CD4-positive, alpha-beta memory T cell (primary cell): ENCODE measurements at regions of chr17 and their contacts with region 1.

Region 1: DNA sequence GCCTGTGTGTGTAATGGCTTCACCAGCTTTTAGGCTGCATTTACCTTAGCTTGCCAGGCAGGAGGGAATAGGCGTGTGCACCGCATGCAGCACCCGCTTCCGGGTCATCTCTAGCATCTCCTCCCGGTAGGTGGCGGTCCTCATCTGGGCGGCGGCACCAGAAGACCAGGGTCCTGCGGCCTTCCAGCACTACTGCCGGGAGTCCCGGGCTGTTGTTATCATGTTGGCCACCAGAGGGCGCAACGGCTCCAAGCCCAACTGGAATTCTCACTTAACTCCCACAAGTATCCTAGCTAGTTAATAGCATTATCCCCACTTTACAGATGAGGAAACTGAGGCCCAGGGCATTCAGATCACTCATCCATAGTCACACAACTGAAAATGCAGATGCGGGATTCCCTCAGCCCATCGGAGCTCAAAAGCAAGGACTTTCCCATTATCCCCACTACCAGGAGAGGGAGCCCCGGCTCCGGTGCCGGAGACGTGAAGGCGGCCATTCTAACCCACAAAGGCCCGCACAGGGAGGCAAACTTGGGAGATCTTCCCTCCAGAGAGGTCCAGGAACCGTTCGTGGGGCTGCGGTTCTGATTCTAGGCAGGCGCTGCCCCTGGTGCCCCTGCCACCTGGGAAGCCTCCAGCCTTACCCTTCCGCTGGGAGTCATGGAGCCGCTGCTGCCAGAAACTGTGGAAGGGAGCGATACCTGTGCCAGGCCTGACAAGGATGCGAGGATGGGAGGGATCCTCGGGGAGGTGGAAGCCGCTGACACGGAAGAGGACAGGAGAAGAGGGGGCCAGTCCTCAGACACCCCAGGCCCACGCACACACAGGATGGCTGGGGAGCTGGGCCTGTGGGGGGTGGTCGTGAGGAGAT is 23.9 kb downstream of the LGALS9 start:
- DNase-seq: peak; percentile 39 to 57 (median 47)
- H3K4me3 ChIP-seq: no peak overlapping the region
- H3K4me3 Mint-ChIP-seq: peak overlapping the region in 1 of 8 donors; percentile 8
- H3K27ac ChIP-seq: no peak overlapping the region
- H3K27ac Mint-ChIP-seq: no peak overlapping the region
- H3K4me1 ChIP-seq: peaks cover 6% of the 10 kb centered on the region
- H3K4me1 Mint-ChIP-seq: peaks cover 0 to 12% (median 7%) of the 10 kb centered on the region in 4 donors
- H3K27me3 ChIP-seq: no peaks in the 10 kb centered on the region
- H3K27me3 Mint-ChIP-seq: peaks cover 0 to 6% of the 10 kb centered on the region in 2 donors

Region 2: DNA sequence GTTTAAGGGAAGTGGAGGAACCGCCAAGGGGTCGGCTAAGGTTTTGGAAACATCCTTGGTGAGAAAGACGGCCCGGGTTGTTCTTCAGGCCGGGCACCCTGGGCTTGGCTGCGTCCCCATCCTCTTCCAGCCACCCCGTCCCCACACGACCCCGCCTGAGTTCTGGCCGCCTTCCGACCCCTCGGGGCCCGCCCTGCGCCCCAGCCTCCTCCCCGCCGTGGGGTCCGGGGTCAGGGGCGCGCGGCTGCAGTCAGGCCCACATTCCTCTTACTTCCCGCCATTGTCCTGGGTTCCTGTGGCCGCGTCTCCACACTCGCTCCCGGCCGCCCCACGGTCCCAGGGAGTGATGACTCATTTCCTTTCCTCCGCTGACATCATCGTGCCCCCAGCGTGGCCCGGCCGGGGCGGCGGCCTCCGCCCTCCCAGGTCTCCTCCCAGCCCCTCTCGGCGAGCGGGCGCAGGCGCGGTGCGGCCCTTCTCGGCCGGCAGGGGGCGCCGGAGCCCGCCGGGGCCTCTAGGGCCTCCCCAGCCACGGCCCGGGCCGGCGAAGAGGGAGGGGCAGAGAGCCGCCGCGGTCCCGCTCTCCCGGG is 301.3 kb before region 1 on chr17:
- CTCF ChIA-PET with region 1: interaction called, 11 read pairs
- POLR2A ChIA-PET with region 1: no interaction called
- intact Hi-C with region 1: loop called (anchors 5 kb)
- DNase-seq: peak; percentile 82 to 88 (median 83)
- H3K4me3 ChIP-seq: peak overlapping the region; percentile 36 to 68
- H3K4me3 Mint-ChIP-seq: peak overlapping the region; percentile 68 to 89 (median 86)
- H3K27ac ChIP-seq: peak overlapping the region; percentile 80
- H3K27ac Mint-ChIP-seq: peak overlapping the region; percentile 75 to 97 (median 95)
- H3K4me1 ChIP-seq: peaks cover 16% of the 10 kb centered on the region
- H3K4me1 Mint-ChIP-seq: peaks cover 10 to 27% (median 19%) of the 10 kb centered on the region in 4 donors
- H3K27me3 ChIP-seq: no peaks in the 10 kb centered on the region
- H3K27me3 Mint-ChIP-seq: no peaks in the 10 kb centered on the region

Region 3: DNA sequence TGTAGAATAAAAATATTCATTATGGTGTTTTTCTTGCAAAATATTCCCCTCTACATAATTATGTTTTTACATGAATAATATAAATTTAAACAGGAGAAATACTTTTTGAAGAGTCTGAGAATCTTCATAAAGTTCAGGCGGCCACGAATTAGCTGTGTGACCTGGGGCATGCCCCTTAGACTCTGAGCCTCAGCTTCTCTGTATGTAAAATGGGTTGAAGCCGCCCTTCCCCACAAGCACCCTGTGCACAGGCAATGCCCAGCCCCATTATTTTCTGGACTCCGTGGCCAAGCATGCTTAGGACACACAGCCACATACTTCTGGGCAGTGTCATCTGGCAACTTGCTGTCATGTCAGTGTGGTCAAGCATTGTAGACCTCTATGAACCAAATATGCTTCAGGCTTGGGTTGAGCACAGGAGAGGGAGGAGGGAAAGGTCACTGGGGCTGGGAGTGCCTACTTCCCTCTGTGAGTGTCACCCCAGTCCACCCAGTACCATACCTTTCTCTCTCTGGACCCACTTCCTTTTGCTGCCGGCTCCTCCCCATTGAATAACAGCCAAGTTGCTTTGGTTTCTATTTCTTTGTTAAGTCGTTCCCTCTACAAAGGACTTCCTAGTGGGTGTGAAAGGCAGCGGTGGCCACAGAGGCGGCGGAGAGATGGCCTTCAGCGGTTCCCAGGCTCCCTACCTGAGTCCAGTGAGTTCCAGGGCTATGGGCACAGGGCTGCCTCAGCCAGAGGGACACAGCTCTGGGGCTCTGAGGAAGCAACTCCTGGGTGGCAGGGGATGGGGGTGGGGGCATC is 24.1 kb before region 1 on chr17 and contains the start of gene LGALS9:
- CTCF ChIA-PET with region 1: interaction called, 30 read pairs
- POLR2A ChIA-PET with region 1: no interaction called
- intact Hi-C with region 1: no loop called
- DNase-seq: peak; percentile 43 to 59 (median 47)
- H3K4me3 ChIP-seq: peak within 1 kb of the TSS; percentile 53 to 73
- H3K4me3 Mint-ChIP-seq: peak within 1 kb of the TSS; percentile 89 to 96 (median 94)
- H3K27ac ChIP-seq: peak within 1 kb of the TSS; percentile 71
- H3K27ac Mint-ChIP-seq: peak within 1 kb of the TSS; percentile 81 to 96 (median 93)
- H3K4me1 ChIP-seq: peaks cover 41% of the 10 kb centered on the region
- H3K4me1 Mint-ChIP-seq: peaks cover 24 to 57% (median 31%) of the 10 kb centered on the region in 4 donors
- H3K27me3 ChIP-seq: no peaks in the 10 kb centered on the region
- H3K27me3 Mint-ChIP-seq: no peaks in the 10 kb centered on the region
- total RNA-seq, gene LGALS9: 19.9 to 24.6 TPM

Region 4: DNA sequence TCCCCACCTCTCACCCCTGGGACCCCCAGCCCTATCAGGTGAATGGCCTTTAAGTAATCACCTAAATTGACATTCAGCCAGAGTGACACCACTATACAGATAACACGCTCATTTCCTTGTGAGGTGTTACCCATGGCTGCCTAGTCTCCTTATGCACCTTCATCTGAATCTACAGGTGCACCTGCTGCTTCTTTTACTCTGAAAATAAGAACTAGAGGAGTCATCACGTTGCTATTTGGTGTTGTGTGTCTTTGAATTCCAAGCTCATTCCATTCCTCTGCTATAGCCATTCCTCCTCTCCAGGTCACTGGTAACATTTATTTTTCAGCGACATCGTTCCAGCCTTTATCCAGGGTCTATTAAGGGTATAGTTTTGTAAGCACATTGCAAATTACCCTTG is 14.1 kb before region 1 on chr17:
- CTCF ChIA-PET with region 1: interaction called, 10 read pairs
- POLR2A ChIA-PET with region 1: no interaction called
- intact Hi-C with region 1: no loop called
- DNase-seq: no peak
- H3K4me3 ChIP-seq: no peak overlapping the region
- H3K4me3 Mint-ChIP-seq: no peak overlapping the region
- H3K27ac ChIP-seq: no peak overlapping the region
- H3K27ac Mint-ChIP-seq: no peak overlapping the region
- H3K4me1 ChIP-seq: peaks cover 2% of the 10 kb centered on the region
- H3K4me1 Mint-ChIP-seq: peaks cover 0 to 5% (median under 1%) of the 10 kb centered on the region in 4 donors
- H3K27me3 ChIP-seq: no peaks in the 10 kb centered on the region
- H3K27me3 Mint-ChIP-seq: no peaks in the 10 kb centered on the region

Region 5: GRCh38 chr17:27666831-27667560 is 12.1 kb after region 1 on chr17:
- CTCF ChIA-PET with region 1: interaction called, 48 read pairs
- POLR2A ChIA-PET with region 1: no interaction called
- intact Hi-C with region 1: no loop called
- DNase-seq: no peak
- H3K4me3 ChIP-seq: no peak overlapping the region
- H3K4me3 Mint-ChIP-seq: no peak overlapping the region
- H3K27ac ChIP-seq: no peak overlapping the region
- H3K27ac Mint-ChIP-seq: peak overlapping the region in 1 of 7 donors; percentile 24
- H3K4me1 ChIP-seq: no peaks in the 10 kb centered on the region
- H3K4me1 Mint-ChIP-seq: no peaks in the 10 kb centered on the region
- H3K27me3 ChIP-seq: no peaks in the 10 kb centered on the region
- H3K27me3 Mint-ChIP-seq: peaks cover 1% of the 10 kb centered on the region in 2 donors

Region 6: DNA sequence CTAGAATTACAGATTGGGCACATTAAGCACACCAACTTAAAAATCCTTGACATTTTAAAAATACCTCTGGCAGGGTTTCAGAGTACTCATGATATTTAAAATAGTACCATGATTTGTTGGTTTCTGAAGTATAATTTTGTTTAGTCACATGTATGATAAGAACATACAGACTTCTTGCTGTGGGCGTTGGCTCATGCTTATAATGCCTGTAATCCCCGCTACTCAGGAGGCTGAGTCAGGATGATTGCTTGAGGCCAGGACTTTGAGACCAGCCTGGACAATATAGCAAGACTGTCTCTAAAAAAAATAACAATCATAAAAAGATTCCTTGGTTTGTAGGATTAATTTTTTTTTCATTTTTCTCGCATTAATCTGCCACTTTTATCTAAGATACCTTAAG is 66.9 kb after region 1 on chr17:
- CTCF ChIA-PET with region 1: no interaction called
- POLR2A ChIA-PET with region 1: no interaction called
- intact Hi-C with region 1: no loop called
- DNase-seq: no peak
- H3K4me3 ChIP-seq: no peak overlapping the region
- H3K4me3 Mint-ChIP-seq: no peak overlapping the region
- H3K27ac ChIP-seq: no peak overlapping the region
- H3K27ac Mint-ChIP-seq: no peak overlapping the region
- H3K4me1 ChIP-seq: no peaks in the 10 kb centered on the region
- H3K4me1 Mint-ChIP-seq: no peaks in the 10 kb centered on the region
- H3K27me3 ChIP-seq: no peaks in the 10 kb centered on the region
- H3K27me3 Mint-ChIP-seq: peaks cover 3 to 4% of the 10 kb centered on the region in 2 donors

Region 7: DNA sequence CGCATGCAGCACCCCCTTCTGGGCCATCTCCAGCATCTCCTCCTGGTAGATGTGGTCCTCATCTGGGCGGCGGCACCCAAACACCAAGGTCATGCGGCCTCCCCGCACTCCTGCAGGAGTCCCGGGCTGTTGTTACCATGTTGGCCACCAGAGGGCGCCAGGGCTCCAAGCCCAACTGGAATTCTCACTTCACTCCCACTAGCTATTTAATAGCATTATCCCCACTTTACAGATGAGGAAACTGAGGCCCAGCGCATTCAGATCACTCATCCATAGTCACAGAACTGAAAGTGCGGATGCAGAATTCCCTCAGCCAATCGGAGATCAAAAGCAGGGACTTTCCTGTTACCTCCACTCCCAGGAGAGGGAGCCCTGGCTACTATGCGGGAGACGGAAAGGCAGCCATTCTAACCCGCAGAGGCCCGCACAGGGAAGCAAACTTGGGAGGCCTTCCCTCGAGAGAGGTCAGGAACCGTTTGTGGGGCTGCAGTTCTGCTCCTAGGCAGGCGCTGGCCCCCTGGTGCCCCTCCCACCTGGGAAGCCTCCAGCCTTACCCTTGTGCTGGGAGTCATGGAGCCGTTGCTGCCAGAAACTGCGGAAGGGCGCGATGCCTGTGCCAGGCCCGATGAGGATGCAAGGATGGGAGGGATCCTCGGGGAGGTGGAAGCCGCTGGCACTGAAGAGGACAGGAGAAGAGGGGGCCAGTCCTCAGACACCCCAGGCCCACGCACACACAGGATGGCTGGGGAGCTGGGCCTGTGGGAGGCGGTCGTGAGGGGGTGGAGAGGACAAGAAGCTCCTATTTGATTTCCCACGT is 105.4 kb after region 1 on chr17:
- CTCF ChIA-PET with region 1: interaction called, 3 read pairs
- POLR2A ChIA-PET with region 1: no interaction called
- intact Hi-C with region 1: loop called (anchors 1 kb)
- DNase-seq: peak; percentile 40 to 63 (median 50)
- H3K4me3 ChIP-seq: no peak overlapping the region
- H3K4me3 Mint-ChIP-seq: no peak overlapping the region
- H3K27ac ChIP-seq: no peak overlapping the region
- H3K27ac Mint-ChIP-seq: no peak overlapping the region
- H3K4me1 ChIP-seq: no peaks in the 10 kb centered on the region
- H3K4me1 Mint-ChIP-seq: peaks cover 0 to 3% (median 0%) of the 10 kb centered on the region in 4 donors
- H3K27me3 ChIP-seq: no peaks in the 10 kb centered on the region
- H3K27me3 Mint-ChIP-seq: peaks cover 2 to 5% of the 10 kb centered on the region in 2 donors

Region 8: GRCh38 chr17:27879987-27880608 is 225.2 kb after region 1 on chr17:
- CTCF ChIA-PET with region 1: interaction called, 9 read pairs
- POLR2A ChIA-PET with region 1: no interaction called
- intact Hi-C with region 1: loop called (anchors 10 kb)
- DNase-seq: peak; percentile 50 to 62 (median 54)
- H3K4me3 ChIP-seq: no peak overlapping the region
- H3K4me3 Mint-ChIP-seq: peak overlapping the region in 2 of 8 donors; percentile 15 to 39
- H3K27ac ChIP-seq: no peak overlapping the region
- H3K27ac Mint-ChIP-seq: peak overlapping the region in 2 of 7 donors; percentile 47 to 48
- H3K4me1 ChIP-seq: peaks cover 16% of the 10 kb centered on the region
- H3K4me1 Mint-ChIP-seq: peaks cover 8 to 21% (median 17%) of the 10 kb centered on the region in 4 donors
- H3K27me3 ChIP-seq: no peaks in the 10 kb centered on the region
- H3K27me3 Mint-ChIP-seq: no peaks in the 10 kb centered on the region

Region 9: DNA sequence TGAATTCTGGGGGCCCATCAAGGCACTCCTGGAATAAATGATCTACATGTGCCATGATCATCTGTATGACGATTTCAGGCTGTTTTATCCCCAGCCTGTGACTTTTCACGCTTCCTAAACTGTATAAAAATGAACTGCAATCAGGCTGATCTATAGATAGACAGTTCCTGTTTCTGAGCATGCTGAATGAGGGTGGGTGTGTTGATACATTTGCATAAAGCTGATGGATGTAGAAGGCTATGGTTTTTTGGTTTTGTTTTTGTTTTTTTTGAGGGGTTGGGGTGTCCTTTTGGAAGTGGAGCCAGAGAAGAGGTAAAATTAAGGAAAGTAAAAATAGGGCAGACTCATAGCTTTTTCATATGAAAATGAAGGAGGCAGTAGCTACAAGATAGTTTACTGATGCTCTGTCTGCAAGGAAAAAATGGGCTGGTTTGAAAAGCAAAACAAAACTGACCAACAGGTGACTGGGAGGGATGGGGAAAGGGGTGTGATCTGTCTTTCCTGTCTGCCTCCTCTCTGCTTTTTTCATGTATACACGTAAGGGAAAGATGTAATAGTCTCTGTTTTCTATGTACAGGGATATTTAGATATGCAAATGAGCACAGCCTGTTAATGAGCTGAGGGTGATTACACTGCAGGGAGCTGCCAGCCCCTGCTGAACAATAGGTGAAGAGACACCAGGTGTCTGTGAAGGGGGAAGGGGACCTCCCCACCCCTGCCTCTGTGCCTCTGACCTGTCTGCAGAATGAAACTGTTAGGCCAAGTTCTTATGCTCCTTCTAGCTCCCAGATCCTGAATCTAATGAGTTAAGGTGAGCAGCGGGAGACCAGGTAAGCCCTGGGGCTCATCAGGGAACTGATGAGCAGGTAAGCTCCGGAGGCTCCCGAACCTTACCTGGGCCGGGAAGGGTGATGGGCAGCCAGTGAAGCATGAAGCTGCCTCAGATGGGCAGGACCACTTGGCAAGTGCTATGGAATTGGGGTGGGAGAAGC is 284.9 kb after region 1 on chr17:
- CTCF ChIA-PET with region 1: no interaction called
- POLR2A ChIA-PET with region 1: no interaction called
- intact Hi-C with region 1: no loop called
- DNase-seq: no peak
- H3K4me3 ChIP-seq: no peak overlapping the region
- H3K4me3 Mint-ChIP-seq: no peak overlapping the region
- H3K27ac ChIP-seq: no peak overlapping the region
- H3K27ac Mint-ChIP-seq: no peak overlapping the region
- H3K4me1 ChIP-seq: no peaks in the 10 kb centered on the region
- H3K4me1 Mint-ChIP-seq: peaks cover 0 to 1% (median 0%) of the 10 kb centered on the region in 4 donors
- H3K27me3 ChIP-seq: no peaks in the 10 kb centered on the region
- H3K27me3 Mint-ChIP-seq: peaks cover 12 to 16% of the 10 kb centered on the region in 2 donors